ENCODE measurements at regions of chr19 and their contacts with region 1.

Region 1: GRCh38 chr19:18594096-18594823 is 5.7 kb downstream of the REX1BD start:
- DNase-seq: peak in 1 of 2 experiments; percentile 90
- H3K4me3 ChIP-seq: peak overlapping the region; percentile 30 to 66 (median 36)
- H3K27ac ChIP-seq: peak overlapping the region; percentile 24; the same call in 1 of the 2 replicates
- H3K4me1 ChIP-seq: peaks cover 2 to 38% (median 28%) of the 10 kb centered on the region in 4 experiments
- H3K27me3 ChIP-seq: peaks cover 0 to 6% (median 3%) of the 10 kb centered on the region in 4 experiments; a peak in 5 of 7 replicates
- CTCF ChIP-seq: peak; percentile 63 to 83 (median 66)
- EP300 ChIP-seq: no peak; a peak in 1 of 3 replicates
- POLR2A ChIP-seq: peak in 1 of 2 experiments; percentile 62; a peak in 1 of 3 replicates
- RAD21 ChIP-seq: peak; percentile 56 to 74; a peak in 3 of 4 replicates

Region 2: GRCh38 chr19:18542936-18543815 is 51.1 kb before region 1 on chr19 and contains the start of gene FKBP8:
- CTCF ChIA-PET with region 1: interaction called, 12 read pairs
- POLR2A ChIA-PET with region 1: interaction called, 4 read pairs
- DNase-seq: peak; percentile 66 to 97
- H3K4me3 ChIP-seq: peak within 1 kb of the TSS; percentile 61 to 77 (median 64)
- H3K27ac ChIP-seq: no peak within 1 kb of the TSS; the same call in 1 of the 2 replicates
- H3K4me1 ChIP-seq: peaks cover 0 to 9% (median 4%) of the 10 kb centered on the region in 4 experiments; a peak in 1 of 7 replicates
- H3K27me3 ChIP-seq: no peaks in the 10 kb centered on the region
- CTCF ChIP-seq: no peak
- EP300 ChIP-seq: no peak
- POLR2A ChIP-seq: no peak
- RAD21 ChIP-seq: no peak
- total RNA-seq, gene FKBP8: 264 and 273 TPM in 2 replicates

Region 3: GRCh38 chr19:18571564-18572300 is 22.5 kb before region 1 on chr19 and contains the start of gene UBA52:
- CTCF ChIA-PET with region 1: interaction called, 28 read pairs
- POLR2A ChIA-PET with region 1: interaction called, 112 read pairs
- DNase-seq: peak; percentile 89 to 99
- H3K4me3 ChIP-seq: peak within 1 kb of the TSS; percentile 93 to 99 (median 98)
- H3K27ac ChIP-seq: peak within 1 kb of the TSS; percentile 89
- H3K4me1 ChIP-seq: peaks cover 0 to 9% (median 6%) of the 10 kb centered on the region in 4 experiments; a peak in 6 of 7 replicates
- H3K27me3 ChIP-seq: no peaks in the 10 kb centered on the region
- CTCF ChIP-seq: peak in 1 of 3 experiments; percentile 15; a peak in 1 of 4 replicates
- EP300 ChIP-seq: no peak
- POLR2A ChIP-seq: peak in 1 of 2 experiments; percentile 91; a peak in 2 of 3 replicates
- RAD21 ChIP-seq: no peak
- total RNA-seq, gene UBA52: 1,331 and 1,340 TPM in 2 replicates

Region 4: DNA sequence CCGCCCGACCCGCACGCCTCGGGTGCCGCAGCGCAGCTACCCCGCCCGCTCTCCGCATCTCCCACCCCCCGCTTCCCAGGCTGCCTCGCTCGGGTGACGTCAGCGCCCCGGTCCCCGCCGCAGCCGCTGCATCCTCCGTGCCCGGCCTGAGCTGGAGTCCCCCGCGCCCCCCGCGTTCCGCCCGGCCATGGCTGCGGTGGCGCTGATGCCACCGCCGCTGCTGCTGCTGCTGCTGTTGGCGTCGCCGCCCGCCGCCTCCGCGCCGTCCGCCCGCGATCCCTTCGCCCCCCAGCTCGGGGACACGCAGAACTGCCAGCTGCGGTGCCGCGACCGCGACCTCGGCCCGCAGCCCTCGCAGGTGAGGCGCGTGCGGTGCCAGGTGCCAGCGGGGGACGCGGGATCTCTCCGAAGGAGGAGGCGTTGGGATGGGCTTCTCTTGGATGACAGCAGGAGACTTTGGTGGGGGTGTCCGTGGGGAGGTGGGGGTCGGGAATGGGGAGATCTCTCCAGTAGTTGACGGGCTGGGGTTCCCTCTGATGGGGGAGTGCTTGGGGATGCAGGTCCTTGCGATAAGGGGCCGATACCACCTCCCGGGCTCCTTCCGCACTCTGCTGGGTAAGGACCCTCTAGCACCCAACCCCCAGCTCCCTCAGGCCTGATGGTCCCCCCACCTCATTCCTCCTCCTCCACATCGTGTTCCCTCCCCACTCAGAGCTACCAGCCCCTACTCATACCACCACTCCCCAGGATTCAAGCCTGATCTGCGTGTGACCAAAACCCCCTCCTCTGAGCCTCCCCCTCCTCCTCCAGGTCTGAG is 18.7 kb after region 1 on chr19 and contains the start of gene TMEM59L:
- CTCF ChIA-PET with region 1: interaction called, 6 read pairs
- POLR2A ChIA-PET with region 1: interaction called, 21 read pairs
- DNase-seq: peak in 1 of 2 experiments; percentile 82
- H3K4me3 ChIP-seq: peak within 1 kb of the TSS; percentile 39 to 75 (median 49)
- H3K27ac ChIP-seq: no peak within 1 kb of the TSS
- H3K4me1 ChIP-seq: peaks cover 27 to 45% (median 31%) of the 10 kb centered on the region in 4 experiments
- H3K27me3 ChIP-seq: peaks cover 54 to 74% (median 70%) of the 10 kb centered on the region in 4 experiments
- CTCF ChIP-seq: no peak
- EP300 ChIP-seq: no peak
- POLR2A ChIP-seq: no peak
- RAD21 ChIP-seq: no peak
- total RNA-seq, gene TMEM59L: 8.6 and 12.2 TPM in 2 replicates

Region 5: GRCh38 chr19:18697680-18698079 is 103.4 kb after region 1 on chr19:
- CTCF ChIA-PET with region 1: no interaction called
- POLR2A ChIA-PET with region 1: no interaction called
- DNase-seq: no peak
- H3K4me3 ChIP-seq: no peak overlapping the region
- H3K27ac ChIP-seq: no peak overlapping the region
- H3K4me1 ChIP-seq: peaks cover 0 to 17% (median 7%) of the 10 kb centered on the region in 4 experiments; a peak in 4 of 7 replicates
- H3K27me3 ChIP-seq: no peaks in the 10 kb centered on the region
- CTCF ChIP-seq: no peak
- EP300 ChIP-seq: no peak
- POLR2A ChIP-seq: no peak
- RAD21 ChIP-seq: no peak

Region 6: GRCh38 chr19:18723871-18724377 is 129.7 kb after region 1 on chr19:
- CTCF ChIA-PET with region 1: no interaction called
- POLR2A ChIA-PET with region 1: no interaction called
- DNase-seq: no peak
- H3K4me3 ChIP-seq: no peak overlapping the region
- H3K27ac ChIP-seq: no peak overlapping the region
- H3K4me1 ChIP-seq: no peaks in the 10 kb centered on the region; a peak in 1 of 7 replicates
- H3K27me3 ChIP-seq: no peaks in the 10 kb centered on the region
- CTCF ChIP-seq: no peak
- EP300 ChIP-seq: no peak
- POLR2A ChIP-seq: no peak
- RAD21 ChIP-seq: no peak

Measured in H1 (cell line).